ENCODE measurements at regions of chr5 and their contacts with region 1.

Region 1: DNA sequence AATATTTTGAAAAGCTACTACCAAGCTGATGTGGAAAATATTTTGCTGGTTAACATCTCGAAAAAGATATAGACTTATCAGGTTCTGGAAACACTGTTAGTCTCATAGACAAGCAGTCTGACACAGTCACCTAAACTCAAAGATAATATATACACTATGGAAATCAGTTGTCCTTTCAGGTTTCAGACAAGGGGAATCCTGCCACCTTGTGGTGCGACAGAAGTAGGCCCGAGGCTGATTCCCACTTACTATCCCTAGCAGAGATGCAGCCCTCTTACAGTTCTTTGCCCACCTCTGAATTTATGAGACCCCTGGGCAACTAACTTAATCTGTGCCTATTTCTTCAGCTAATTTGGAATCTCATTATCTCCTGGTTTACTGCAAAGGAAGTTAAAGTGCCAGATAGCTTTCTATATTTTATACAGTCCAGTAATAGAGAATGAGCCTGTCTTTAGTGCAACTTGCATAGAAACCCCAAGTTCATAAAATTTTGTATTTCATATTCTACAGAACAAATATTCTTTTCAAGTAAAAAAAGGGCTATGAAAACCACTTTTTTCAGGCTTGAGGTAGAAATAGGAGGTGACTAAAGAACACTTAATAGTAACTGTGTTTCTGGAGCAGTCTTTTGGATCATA is 16.9 kb downstream of the RAD1 start:
- DNase-seq: peak; percentile 10 to 61
- H3K4me3 ChIP-seq: no peak overlapping the region
- H3K27ac ChIP-seq: no peak overlapping the region
- H3K4me1 ChIP-seq: peaks cover 0 to 11% (median 0%) of the 10 kb centered on the region in 4 experiments; a peak in 1 of 7 replicates
- H3K27me3 ChIP-seq: no peaks in the 10 kb centered on the region
- CTCF ChIP-seq: peak; percentile 79 to 85 (median 81)
- EP300 ChIP-seq: no peak
- POLR2A ChIP-seq: no peak
- RAD21 ChIP-seq: peak; percentile 91 to 95

Region 2: GRCh38 chr5:34474573-34475021 is 423.8 kb before region 1 on chr5:
- CTCF ChIA-PET with region 1: interaction called, 21 read pairs
- POLR2A ChIA-PET with region 1: interaction called, 5 read pairs
- DNase-seq: no peak
- H3K4me3 ChIP-seq: peak overlapping the region in 1 of 4 experiments; percentile 32; a peak in 1 of 8 replicates
- H3K27ac ChIP-seq: peak overlapping the region; percentile 92
- H3K4me1 ChIP-seq: peaks cover 6 to 14% (median 9%) of the 10 kb centered on the region in 4 experiments; a peak in 6 of 7 replicates
- H3K27me3 ChIP-seq: no peaks in the 10 kb centered on the region
- CTCF ChIP-seq: peak in 2 of 3 experiments; percentile 75 to 87; a peak in 3 of 4 replicates
- EP300 ChIP-seq: no peak
- POLR2A ChIP-seq: no peak
- RAD21 ChIP-seq: peak; percentile 92 to 94

Region 3: GRCh38 chr5:34522599-34523386 is 375.6 kb before region 1 on chr5:
- CTCF ChIA-PET with region 1: interaction called, 17 read pairs
- POLR2A ChIA-PET with region 1: interaction called, 4 read pairs
- DNase-seq: peak; percentile 67 to 89
- H3K4me3 ChIP-seq: no peak overlapping the region
- H3K27ac ChIP-seq: no peak overlapping the region
- H3K4me1 ChIP-seq: peaks cover 0 to 9% (median 3%) of the 10 kb centered on the region in 4 experiments; a peak in 3 of 7 replicates
- H3K27me3 ChIP-seq: no peaks in the 10 kb centered on the region
- CTCF ChIP-seq: peak; percentile 43 to 89 (median 74)
- EP300 ChIP-seq: peak in 1 of 2 experiments; percentile 37; a peak in 1 of 3 replicates
- POLR2A ChIP-seq: no peak
- RAD21 ChIP-seq: peak; percentile 90

Region 4: GRCh38 chr5:34826347-34826746 is 72.0 kb before region 1 on chr5:
- CTCF ChIA-PET with region 1: interaction called, 39 read pairs
- POLR2A ChIA-PET with region 1: no interaction called
- DNase-seq: no peak
- H3K4me3 ChIP-seq: no peak overlapping the region
- H3K27ac ChIP-seq: no peak overlapping the region
- H3K4me1 ChIP-seq: no peaks in the 10 kb centered on the region
- H3K27me3 ChIP-seq: no peaks in the 10 kb centered on the region
- CTCF ChIP-seq: 0 out of 4 replicates have a peak, but pooled peaks of 1 of the 3 experiments have one; percentile 3
- EP300 ChIP-seq: no peak
- POLR2A ChIP-seq: no peak
- RAD21 ChIP-seq: peak in 1 of 2 experiments; percentile 15; a peak in 1 of 4 replicates

Region 5: GRCh38 chr5:34886392-34887119 is 11.8 kb before region 1 on chr5:
- CTCF ChIA-PET with region 1: interaction called, 10 read pairs
- POLR2A ChIA-PET with region 1: interaction called, 4 read pairs
- DNase-seq: no peak
- H3K4me3 ChIP-seq: no peak overlapping the region
- H3K27ac ChIP-seq: no peak overlapping the region
- H3K4me1 ChIP-seq: no peaks in the 10 kb centered on the region
- H3K27me3 ChIP-seq: no peaks in the 10 kb centered on the region
- CTCF ChIP-seq: no peak
- EP300 ChIP-seq: no peak
- POLR2A ChIP-seq: no peak
- RAD21 ChIP-seq: no peak

Region 6: DNA sequence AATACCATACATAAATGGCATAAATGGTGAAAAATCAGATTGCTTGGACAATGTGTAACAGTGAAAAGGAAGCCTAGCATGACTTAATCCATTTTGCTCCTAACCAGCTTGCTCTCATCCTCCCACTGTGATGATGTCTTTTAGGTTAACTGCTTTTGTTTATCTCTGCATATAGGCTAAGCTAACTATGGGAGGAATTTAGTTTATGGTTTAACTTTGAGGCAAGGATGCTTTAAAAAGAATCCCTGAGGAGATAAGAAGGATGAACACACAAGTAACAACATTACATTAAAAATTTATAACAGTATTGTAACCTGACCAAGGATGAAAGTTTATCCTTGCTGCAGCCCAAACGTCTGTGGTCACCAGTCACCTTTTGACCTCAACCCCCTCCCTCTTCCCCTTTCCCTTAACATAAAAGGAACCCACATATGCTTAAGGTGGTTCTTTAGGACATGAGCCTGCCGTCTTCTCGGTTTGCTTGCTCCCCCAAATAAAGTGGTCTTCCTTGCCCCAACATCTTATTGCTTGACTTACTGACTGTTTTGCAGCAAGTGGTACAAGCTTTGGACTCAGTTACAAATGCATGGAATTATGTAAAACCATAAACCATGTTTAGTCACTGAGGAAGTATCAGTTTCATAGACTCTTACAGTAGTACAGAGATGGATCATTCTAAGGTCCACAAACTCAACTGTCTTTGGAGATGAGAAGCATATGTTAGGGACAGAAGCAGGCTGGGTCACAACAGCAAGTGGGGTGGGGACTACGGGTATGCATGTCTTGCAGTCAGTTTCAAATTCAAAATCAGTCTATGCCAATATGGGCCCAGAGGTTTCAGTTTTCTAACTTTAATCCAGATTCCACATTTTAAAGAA is 118.0 kb after region 1 on chr5:
- CTCF ChIA-PET with region 1: no interaction called
- POLR2A ChIA-PET with region 1: no interaction called
- DNase-seq: no peak
- H3K4me3 ChIP-seq: no peak overlapping the region
- H3K27ac ChIP-seq: no peak overlapping the region
- H3K4me1 ChIP-seq: no peaks in the 10 kb centered on the region
- H3K27me3 ChIP-seq: no peaks in the 10 kb centered on the region
- CTCF ChIP-seq: no peak
- EP300 ChIP-seq: no peak
- POLR2A ChIP-seq: no peak
- RAD21 ChIP-seq: no peak

Measured in H1 (cell line).